GM10248 (cell line): ENCODE measurements at regions of chr6 and their contacts with region 1.

Region 1: GRCh38 chr6:88860310-88860709 is 103.1 kb downstream of the RNGTT start:
- DNase-seq: no peak
- CTCF ChIP-seq: no peak

Region 2: DNA sequence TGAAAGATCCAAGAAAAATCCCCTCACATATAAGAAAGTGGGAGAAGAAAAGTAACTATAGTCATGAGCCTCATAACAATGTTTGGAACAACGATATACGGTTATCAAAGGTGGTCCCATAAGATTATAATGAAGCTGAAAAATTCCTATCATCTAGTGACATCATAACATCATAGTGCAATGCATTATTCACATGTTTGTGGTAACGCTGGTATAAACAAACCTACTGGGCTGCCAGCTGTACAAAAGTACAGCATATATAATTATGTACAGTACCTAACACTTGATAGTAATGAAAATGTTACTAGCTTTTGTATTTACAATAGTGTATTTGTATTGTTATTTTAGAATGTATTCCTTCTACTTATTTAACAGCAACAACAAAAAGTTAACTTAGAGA is 137.6 kb before region 1 on chr6:
- CTCF ChIA-PET with region 1: no interaction called
- POLR2A ChIA-PET with region 1: no interaction called
- DNase-seq: no peak
- CTCF ChIP-seq: no peak

Region 3: GRCh38 chr6:88823998-88824397 is 36.3 kb before region 1 on chr6:
- CTCF ChIA-PET with region 1: no interaction called
- POLR2A ChIA-PET with region 1: no interaction called
- DNase-seq: no peak
- CTCF ChIP-seq: no peak

Region 4: GRCh38 chr6:88870717-88871330 is 10.5 kb after region 1 on chr6:
- CTCF ChIA-PET with region 1: interaction called, 19 read pairs
- POLR2A ChIA-PET with region 1: no interaction called
- DNase-seq: peak; percentile 15
- CTCF ChIP-seq: peak; percentile 60